ENCODE measurements at regions of chr1 and their contacts with region 1.

Region 1: DNA sequence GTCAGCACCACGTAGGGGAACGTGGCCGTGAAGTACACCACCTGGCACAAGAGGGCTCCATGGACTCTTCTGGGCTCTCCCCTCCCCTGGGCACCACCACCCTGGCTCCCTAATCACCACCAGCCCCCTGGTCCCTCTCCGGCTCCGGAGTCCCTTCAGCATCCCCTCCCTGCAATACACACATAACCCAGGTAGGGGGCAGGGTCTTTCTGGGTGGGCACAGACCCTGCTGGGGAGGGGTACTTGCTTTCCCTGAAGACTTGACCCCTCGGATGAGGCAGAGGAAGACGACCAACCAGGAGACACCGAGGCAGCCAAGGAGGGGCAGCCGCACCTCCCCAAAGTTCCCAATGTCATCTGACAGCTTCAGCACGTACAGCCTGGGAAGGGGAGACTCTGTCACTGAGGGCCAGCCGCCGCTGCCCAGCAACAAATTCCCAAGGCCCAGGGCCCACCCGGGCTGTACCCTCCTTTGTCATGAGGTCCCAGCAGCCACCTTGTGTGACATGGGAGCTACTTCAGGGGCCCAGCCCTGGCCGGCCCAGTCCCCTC is 11.3 kb downstream of the CCDC24 start:
- DNase-seq: no peak
- H3K4me3 Mint-ChIP-seq: no peak overlapping the region
- H3K27ac Mint-ChIP-seq: no peak overlapping the region
- H3K4me1 Mint-ChIP-seq: peaks cover 5% of the 10 kb centered on the region
- H3K27me3 Mint-ChIP-seq: no peaks in the 10 kb centered on the region

Region 2: GRCh38 chr1:43956234-43956633 is 46.4 kb before region 1 on chr1:
- CTCF ChIA-PET with region 1: no interaction called
- POLR2A ChIA-PET with region 1: no interaction called
- DNase-seq: no peak
- H3K4me3 Mint-ChIP-seq: no peak overlapping the region
- H3K27ac Mint-ChIP-seq: no peak overlapping the region
- H3K4me1 Mint-ChIP-seq: no peaks in the 10 kb centered on the region
- H3K27me3 Mint-ChIP-seq: no peaks in the 10 kb centered on the region

Region 3: DNA sequence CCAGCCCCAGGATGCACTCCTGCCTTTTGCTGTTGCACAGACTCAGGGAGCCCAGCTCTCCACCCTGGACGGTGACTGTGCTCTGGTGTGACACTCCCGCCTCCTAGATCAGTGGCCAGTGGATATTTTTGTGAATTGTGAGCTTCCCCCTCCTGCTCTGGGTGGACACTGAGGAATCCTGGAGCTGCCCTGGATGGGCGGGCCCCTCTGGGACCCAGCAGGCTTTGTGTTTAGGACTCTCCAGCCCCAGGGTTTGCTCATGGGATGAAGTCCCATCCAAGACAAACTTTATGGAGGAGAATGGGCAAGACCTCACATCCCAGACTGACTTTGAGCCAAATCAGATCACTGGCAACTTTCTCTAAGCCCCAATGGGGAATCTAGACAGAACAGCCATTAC is 12.5 kb after region 1 on chr1:
- CTCF ChIA-PET with region 1: interaction called, 12 read pairs
- POLR2A ChIA-PET with region 1: interaction called, 3 read pairs
- DNase-seq: no peak
- H3K4me3 Mint-ChIP-seq: no peak overlapping the region
- H3K27ac Mint-ChIP-seq: no peak overlapping the region
- H3K4me1 Mint-ChIP-seq: no peaks in the 10 kb centered on the region
- H3K27me3 Mint-ChIP-seq: no peaks in the 10 kb centered on the region

Region 4: GRCh38 chr1:44021581-44022321 is 19.1 kb after region 1 on chr1:
- CTCF ChIA-PET with region 1: interaction called, 14 read pairs
- POLR2A ChIA-PET with region 1: no interaction called
- DNase-seq: no peak
- H3K4me3 Mint-ChIP-seq: no peak overlapping the region
- H3K27ac Mint-ChIP-seq: no peak overlapping the region
- H3K4me1 Mint-ChIP-seq: no peaks in the 10 kb centered on the region
- H3K27me3 Mint-ChIP-seq: no peaks in the 10 kb centered on the region

Region 5: DNA sequence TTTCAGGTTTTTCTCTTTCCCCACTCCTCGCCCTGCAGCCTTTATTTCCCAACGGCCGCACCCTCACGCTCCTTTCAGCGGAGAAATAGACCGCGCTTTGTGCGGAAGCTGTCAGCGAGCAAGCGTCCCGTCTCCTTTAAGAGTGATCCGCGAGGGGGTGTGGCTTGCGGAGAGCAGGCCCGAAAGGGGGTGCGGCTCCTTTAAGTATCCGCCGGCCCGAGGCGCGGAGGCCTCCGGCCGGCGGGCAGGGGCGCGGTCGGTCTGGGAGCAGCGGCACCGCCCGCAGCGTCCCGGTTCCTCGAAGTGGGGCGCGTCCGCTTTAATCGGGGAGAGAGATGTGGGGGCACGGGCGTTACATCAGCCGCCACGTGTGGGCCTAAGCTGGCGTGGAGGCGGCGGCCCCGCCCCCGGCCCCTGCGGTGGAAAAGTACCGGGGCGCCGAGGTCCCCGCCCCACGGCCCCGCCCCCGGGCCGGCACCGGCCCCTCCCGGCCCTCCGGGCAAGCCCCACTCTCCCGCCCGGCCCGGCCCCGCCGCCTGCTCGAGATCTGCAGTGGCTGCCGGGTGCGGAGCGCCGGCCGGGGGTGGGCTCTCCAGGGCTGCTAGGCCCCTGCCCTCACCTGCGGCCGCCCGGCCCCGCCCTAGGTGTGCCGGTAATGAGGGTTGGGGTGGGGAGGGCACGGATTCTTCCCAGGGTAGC is 27.4 kb after region 1 on chr1:
- CTCF ChIA-PET with region 1: interaction called, 74 read pairs
- POLR2A ChIA-PET with region 1: no interaction called
- DNase-seq: peak; percentile 90
- H3K4me3 Mint-ChIP-seq: peak overlapping the region; percentile 95
- H3K27ac Mint-ChIP-seq: peak overlapping the region; percentile 94
- H3K4me1 Mint-ChIP-seq: peaks cover 32% of the 10 kb centered on the region
- H3K27me3 Mint-ChIP-seq: no peaks in the 10 kb centered on the region

Region 6: GRCh38 chr1:44036409-44037139 is 33.9 kb after region 1 on chr1:
- CTCF ChIA-PET with region 1: interaction called, 74 read pairs
- POLR2A ChIA-PET with region 1: no interaction called
- DNase-seq: peak; percentile 71
- H3K4me3 Mint-ChIP-seq: no peak overlapping the region
- H3K27ac Mint-ChIP-seq: no peak overlapping the region
- H3K4me1 Mint-ChIP-seq: peaks cover 15% of the 10 kb centered on the region
- H3K27me3 Mint-ChIP-seq: peaks cover 7% of the 10 kb centered on the region

Region 7: DNA sequence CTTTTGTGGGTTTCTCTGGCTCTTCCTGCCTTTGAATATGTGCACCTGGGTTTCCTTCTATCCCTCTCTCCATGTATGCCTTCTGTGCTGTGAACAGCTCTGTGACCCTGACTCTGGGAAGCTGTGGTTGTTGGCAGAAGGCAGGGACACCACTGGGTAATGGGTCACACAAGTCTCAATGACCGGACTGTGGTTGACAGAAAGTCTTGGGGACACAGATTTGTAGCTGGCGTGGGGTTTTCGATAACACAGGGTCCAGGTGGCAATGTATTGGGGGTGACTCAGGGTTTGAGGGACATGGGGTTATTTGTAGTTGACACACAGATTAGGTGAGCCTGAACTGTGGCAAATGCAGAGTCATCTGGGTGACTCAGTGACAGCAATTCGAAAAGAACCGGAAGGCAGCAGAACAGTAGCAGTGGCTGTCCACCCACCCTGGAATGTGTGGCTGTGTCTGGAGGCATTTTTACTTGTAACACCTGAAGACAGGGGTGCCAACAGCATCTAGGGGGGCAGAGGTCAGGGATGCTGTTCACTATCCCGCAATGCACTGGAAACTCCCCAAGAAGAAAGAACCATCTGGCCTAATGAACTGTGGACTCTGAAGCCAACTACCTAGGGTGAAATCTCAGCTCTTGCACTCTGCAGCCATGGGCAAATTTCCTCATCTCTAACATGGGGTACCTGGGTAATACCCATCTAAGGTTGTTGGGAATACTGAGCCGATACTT is 41.6 kb after region 1 on chr1:
- CTCF ChIA-PET with region 1: interaction called, 61 read pairs
- POLR2A ChIA-PET with region 1: no interaction called
- DNase-seq: no peak
- H3K4me3 Mint-ChIP-seq: no peak overlapping the region
- H3K27ac Mint-ChIP-seq: no peak overlapping the region
- H3K4me1 Mint-ChIP-seq: peaks cover 18% of the 10 kb centered on the region
- H3K27me3 Mint-ChIP-seq: peaks cover 18% of the 10 kb centered on the region

Region 8: DNA sequence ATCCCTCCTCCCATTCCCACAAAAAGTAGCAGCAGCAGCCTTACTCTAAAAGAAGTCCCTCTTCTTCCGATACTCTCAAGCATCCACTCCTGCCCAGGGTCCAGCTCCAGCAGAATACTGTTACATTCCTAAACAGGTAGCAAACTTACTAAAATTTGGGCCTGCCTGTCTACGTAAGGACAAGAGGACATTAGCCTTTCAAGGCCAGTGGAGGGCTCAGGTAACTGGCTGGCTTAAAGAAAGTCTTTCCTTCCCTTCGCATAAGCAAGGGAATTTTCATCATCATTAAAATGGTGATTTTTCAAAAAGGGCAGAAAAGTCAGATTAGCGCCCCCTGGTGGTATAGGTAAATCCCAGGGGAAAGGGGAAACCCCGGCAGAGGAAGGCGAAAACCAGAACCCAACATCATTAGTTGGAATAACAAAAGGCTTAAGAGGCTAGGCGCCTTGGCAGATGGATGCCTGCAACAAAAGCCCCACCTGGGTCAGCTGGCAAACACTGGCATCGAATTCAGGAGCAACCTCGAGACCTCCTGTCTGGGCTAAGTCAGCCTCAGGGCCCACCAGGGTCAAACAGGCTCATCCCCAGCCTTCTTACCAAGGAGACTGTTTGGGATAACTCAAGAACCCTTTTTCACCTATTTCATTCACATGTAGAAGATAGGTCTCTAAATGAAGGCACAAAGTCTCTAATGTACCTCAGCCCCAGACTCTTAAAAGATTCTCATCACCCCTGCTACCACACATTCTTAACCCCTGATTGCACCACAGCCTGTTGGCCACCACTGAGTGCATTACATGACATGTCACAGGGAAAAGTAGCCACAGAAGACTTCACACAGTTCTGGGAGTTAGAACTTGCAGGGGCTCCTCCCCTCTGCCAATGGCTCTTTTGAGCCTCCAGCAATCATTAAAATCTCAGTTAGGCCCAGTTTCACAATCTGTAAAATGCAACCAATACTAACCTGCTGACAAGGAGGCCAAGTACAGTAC is 315.7 kb after region 1 on chr1:
- CTCF ChIA-PET with region 1: no interaction called
- POLR2A ChIA-PET with region 1: no interaction called
- DNase-seq: peak; percentile 38
- H3K4me3 Mint-ChIP-seq: no peak overlapping the region
- H3K27ac Mint-ChIP-seq: no peak overlapping the region
- H3K4me1 Mint-ChIP-seq: peaks cover 8% of the 10 kb centered on the region
- H3K27me3 Mint-ChIP-seq: no peaks in the 10 kb centered on the region

Measured in activated CD4-positive, alpha-beta memory T cell treated with anti-CD3 and anti-CD28 coated beads, Interleukin-2, amount 10 ng/mL, durations not matched to agents 7 days and 5 days (primary cell).